ENCODE measurements at regions of chr14 and their contacts with region 1.

Region 1: GRCh38 chr14:101964297-101965144 is at the start of gene DYNC1H1:
- DNase-seq: peak; percentile 69 to 91 (median 86)
- H3K4me3 ChIP-seq: peak within 1 kb of the TSS; percentile 65 to 95 (median 93)
- H3K4me3 Mint-ChIP-seq: peak within 1 kb of the TSS; percentile 91 to 94
- H3K27ac ChIP-seq: peak within 1 kb of the TSS; percentile 78 to 85
- H3K27ac Mint-ChIP-seq: peak within 1 kb of the TSS; percentile 88 to 94 (median 92)
- H3K4me1 ChIP-seq: peaks cover 17 to 25% of the 10 kb centered on the region in 2 donors
- H3K4me1 Mint-ChIP-seq: peaks cover 30% of the 10 kb centered on the region
- H3K27me3 ChIP-seq: no peaks in the 10 kb centered on the region
- H3K27me3 Mint-ChIP-seq: peaks cover 2 to 5% (median 3%) of the 10 kb centered on the region in 3 donors
- CTCF ChIP-seq: no peak
- polyA plus RNA-seq, gene DYNC1H1: 14.7 to 87.3 (median 23.6) TPM

Region 2: DNA sequence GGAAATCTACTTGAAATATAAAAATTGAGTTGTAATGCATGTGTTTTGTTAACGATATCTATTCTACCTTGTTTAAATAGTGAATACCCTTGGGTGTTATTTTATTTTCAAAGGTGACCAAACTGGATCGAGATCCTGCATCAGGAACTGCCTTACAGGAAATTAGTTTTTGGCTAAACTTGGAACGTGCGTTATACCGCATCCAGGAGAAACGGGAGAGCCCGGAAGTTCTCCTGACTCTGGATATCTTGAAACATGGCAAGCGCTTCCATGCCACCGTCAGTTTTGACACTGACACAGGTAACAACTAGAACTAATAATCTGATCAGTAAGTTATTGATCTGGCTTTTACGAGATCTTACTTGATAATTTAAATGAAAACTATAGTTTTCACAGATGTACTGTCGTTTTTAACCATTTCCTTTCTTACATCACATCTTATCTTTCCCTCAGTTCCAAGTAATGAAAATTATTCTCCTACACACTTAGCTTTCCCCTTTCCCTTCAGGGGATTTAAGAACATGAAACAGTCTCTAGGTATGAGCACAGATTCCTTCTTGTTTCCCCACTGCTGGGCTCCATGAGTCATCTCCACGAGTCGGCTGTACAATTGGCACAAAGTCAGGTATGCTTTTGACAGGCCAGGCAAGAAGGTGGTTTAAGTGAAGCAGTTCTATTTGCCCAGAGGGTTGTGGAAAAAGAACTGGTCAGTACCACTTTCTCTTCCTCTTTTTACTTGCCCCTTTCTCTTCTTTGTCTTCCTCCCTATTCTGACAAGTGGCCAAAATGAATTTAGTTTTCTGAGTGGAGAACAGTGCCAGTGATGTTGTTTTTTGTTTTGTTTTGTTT is 16.0 kb after region 1 on chr14:
- intact Hi-C with region 1: loop called in 1 of 2 experiments (anchors 2 kb)
- DNase-seq: peak; percentile 54 to 85 (median 63)
- H3K4me3 ChIP-seq: no peak overlapping the region
- H3K4me3 Mint-ChIP-seq: no peak overlapping the region
- H3K27ac ChIP-seq: peak overlapping the region; percentile 13 to 74
- H3K27ac Mint-ChIP-seq: peak overlapping the region; percentile 52 to 93 (median 83)
- H3K4me1 ChIP-seq: peaks cover 3 to 8% of the 10 kb centered on the region in 2 donors
- H3K4me1 Mint-ChIP-seq: peaks cover 5% of the 10 kb centered on the region
- H3K27me3 ChIP-seq: no peaks in the 10 kb centered on the region
- H3K27me3 Mint-ChIP-seq: no peaks in the 10 kb centered on the region
- CTCF ChIP-seq: no peak

Measured in CD14-positive monocyte (primary cell).